HepG2 (cell line): ENCODE measurements at regions of chr14 and their contacts with region 1.

Region 1: GRCh38 chr14:68172627-68173026 is 353.0 kb downstream of the RAD51B start:
- DNase-seq: peak; percentile 94
- ATAC-seq: peak; percentile 97
- H3K4me3 ChIP-seq: peak overlapping the region; percentile 29 to 54 (median 52); a peak in 4 of 6 replicates
- H3K27ac ChIP-seq: peak overlapping the region; percentile 81
- H3K4me1 ChIP-seq: peaks cover 52% of the 10 kb centered on the region
- H3K27me3 ChIP-seq: no peaks in the 10 kb centered on the region
- CTCF ChIP-seq: no peak
- EP300 ChIP-seq: peak in 1 of 2 experiments; percentile 79; a peak in 2 of 4 replicates
- POLR2A ChIP-seq: no peak
- RAD21 ChIP-seq: no peak

Region 2: DNA sequence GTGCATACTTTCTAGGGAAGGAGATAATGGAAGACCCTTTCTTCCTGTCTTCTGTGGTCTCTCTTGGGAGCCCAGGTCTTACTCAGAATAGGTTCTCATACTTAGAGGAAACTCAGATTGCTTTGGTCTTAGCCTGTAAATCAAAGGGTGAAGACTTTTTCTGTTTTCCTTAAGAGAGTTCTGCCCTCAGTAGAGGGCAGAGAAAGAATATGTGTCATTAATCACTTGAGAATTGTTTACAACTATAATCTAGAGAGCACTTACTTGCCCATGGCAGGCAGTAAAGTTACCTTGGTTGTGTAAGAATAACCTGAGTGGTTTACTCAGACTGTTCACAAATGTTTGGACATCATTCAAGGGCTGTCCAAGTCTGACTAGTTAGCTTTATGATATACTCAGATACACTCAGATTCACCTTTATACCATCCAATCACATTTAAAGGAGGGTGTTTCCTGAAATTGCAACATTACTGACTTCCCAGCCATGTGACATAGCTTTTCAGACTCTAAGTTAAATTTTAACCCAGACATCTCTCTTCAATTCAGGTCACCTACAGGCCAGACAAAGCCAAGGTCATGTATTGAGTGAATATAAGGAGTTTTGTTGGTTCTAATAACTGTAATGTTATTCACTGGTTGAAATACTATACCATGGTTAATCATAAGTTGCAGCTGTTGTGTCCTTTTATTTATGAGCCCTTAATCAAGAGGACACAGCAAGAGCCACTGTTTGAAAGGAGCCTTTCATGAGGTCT is 19.1 kb after region 1 on chr14:
- CTCF ChIA-PET with region 1: no interaction called
- POLR2A ChIA-PET with region 1: interaction called, 6 read pairs
- in situ Hi-C with region 1: no loop called
- intact Hi-C with region 1: loop called (anchors 2 kb)
- DNase-seq: peak; percentile 92
- ATAC-seq: peak; percentile 95
- H3K4me3 ChIP-seq: no peak overlapping the region
- H3K27ac ChIP-seq: no peak overlapping the region
- H3K4me1 ChIP-seq: peaks cover 60% of the 10 kb centered on the region
- H3K27me3 ChIP-seq: no peaks in the 10 kb centered on the region
- CTCF ChIP-seq: no peak
- EP300 ChIP-seq: peak in 1 of 2 experiments; percentile 73; a peak in 2 of 4 replicates
- POLR2A ChIP-seq: no peak
- RAD21 ChIP-seq: no peak